Activated naive CD4-positive, alpha-beta T cell treated with anti-CD3 and anti-CD28 coated beads for 36 hours (primary cell): ENCODE measurements at regions of chr19 and their contacts with region 1.

Region 1: DNA sequence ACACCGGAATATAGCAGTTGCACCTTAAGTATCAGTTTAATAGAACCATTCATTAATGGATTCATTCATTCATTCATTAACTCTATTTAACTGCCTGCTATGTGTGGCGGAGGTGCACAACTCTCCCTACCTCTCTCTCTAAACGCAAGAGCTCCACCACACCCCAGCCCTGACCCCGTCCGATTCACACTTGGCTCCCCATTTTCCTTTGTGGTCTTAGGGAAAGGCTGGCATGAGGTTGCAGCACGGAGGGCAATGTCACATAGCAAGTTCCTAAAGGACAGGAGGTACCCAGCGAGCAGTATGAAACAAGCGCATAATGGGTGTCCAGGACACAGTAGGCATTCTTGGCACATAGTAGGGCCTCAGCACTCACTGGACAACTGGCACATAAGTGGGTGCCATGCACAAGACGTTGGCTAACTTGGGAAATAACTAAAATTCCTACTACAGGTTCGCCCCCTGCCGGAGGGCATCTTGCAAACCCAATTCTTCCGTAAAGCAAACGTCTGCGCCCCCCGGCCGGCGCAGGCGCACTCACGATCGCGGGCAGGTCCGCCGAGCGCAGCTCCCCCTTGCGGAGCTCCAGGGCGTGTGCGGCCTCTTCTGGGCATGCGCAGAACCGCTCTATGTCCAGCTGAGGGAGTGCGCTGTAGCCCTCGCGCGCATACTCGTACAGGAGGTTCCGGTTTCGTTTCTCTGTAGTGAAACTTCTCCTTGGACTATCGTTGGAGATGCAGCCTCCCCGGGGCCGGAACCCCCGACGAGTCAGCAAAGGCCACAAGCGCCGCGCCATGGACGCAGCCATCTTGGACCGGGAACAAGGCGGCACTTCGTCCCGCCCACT is at the start of gene SARS2:
- DNase-seq: peak; percentile 94
- H3K4me3 Mint-ChIP-seq: peak within 1 kb of the TSS; percentile 98
- H3K27ac Mint-ChIP-seq: peak within 1 kb of the TSS; percentile 96
- H3K4me1 Mint-ChIP-seq: peaks cover 41% of the 10 kb centered on the region
- H3K27me3 Mint-ChIP-seq: no peaks in the 10 kb centered on the region
- total RNA-seq, gene SARS2: 43.6 to 52.6 TPM

Region 2: DNA sequence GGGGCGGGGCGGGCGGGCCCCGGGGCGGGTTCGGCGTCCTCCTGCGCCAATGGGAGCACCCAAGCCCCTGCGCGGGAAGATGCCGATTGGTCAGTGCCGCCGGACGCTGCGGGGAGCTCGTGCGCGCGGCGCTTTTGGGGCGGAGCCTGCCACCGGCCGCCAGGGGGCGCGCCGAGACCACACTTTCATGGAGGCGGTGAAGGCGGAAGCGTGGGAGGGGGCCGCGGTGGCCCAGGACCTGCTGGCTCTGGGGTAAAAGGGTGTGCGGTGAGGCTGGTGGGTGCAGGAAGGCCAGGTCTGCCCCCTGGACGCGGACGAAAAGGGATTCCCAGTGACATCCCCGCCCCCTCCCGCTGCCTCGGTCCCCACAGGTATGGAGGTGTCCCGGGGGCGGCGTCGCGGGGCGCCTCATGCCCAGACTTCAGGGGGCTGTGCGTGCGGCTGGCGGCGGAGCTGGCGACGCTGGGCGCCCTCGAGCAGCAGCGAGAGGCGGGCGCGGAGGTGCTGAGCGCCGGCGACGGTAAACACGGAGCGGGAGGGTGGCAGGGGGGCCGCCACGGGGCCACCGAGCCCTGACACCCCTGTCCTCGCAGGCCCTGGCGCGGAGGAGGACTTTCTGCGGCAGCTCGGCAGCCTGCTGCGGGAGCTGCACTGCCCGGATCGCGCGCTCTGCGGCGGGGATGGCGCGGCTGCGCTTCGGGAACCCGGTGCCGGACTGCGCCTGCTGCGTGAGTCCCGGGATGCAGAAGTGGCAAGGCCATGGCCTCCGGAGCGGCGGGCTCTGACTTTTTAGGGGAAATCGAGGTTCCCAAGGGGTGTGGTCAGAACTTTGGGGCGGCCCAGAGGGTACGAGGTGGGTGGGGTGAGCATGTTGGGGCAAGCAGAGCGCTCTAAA is 526.9 kb before region 1 on chr19 and contains the start of gene FAM98C:
- CTCF ChIA-PET with region 1: interaction called, 13 read pairs
- intact Hi-C with region 1: loop called (anchors 2 kb)
- DNase-seq: peak; percentile 98
- H3K4me3 Mint-ChIP-seq: peak within 1 kb of the TSS; percentile 90
- H3K27ac Mint-ChIP-seq: peak within 1 kb of the TSS; percentile 84
- H3K4me1 Mint-ChIP-seq: peaks cover 15% of the 10 kb centered on the region
- H3K27me3 Mint-ChIP-seq: no peaks in the 10 kb centered on the region
- total RNA-seq, gene FAM98C: 21.5 to 27.0 TPM

Region 3: DNA sequence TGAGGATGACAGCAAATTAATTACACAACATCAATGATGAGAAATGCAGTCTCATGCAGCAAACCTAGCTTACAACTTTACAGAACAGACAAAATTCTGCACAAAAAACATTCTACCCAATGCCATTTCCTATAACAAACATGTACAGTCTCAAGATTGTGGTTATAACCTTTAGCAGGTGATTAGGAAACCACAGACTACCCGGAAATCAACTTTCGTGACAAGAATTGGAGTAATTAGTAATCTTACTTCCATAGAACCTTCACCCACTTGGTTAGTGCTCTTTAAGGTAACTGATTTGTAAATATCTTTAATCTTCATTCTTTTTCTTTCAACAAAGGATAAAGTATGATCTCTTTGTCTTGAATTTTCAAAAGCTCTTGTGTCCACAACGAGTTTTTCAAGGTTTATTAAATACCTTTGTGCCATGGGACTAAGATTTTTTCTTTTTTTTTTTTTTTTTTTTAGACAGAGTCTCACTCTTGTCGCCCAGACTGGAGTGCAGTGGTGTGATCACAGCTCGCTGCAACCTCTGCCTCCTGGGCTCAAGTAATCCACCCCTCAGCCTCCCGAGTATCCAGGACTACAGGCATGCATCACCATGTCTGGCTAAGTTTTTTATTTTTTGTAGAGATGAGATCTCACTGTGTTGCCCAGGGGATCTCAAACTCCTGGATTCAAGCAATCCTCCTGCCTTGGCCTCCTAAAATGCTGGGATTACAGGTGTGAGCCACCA is 391.2 kb before region 1 on chr19:
- CTCF ChIA-PET with region 1: interaction called, 3 read pairs
- intact Hi-C with region 1: loop called (anchors 1 kb)
- DNase-seq: peak; percentile 61
- H3K4me3 Mint-ChIP-seq: peak overlapping the region; percentile 14
- H3K27ac Mint-ChIP-seq: peak overlapping the region; percentile 85
- H3K4me1 Mint-ChIP-seq: peaks cover 35% of the 10 kb centered on the region
- H3K27me3 Mint-ChIP-seq: no peaks in the 10 kb centered on the region

Region 4: GRCh38 chr19:38634757-38635482 is 295.2 kb before region 1 on chr19:
- CTCF ChIA-PET with region 1: interaction called, 4 read pairs
- intact Hi-C with region 1: loop called (anchors 1 kb)
- DNase-seq: peak; percentile 80
- H3K4me3 Mint-ChIP-seq: no peak overlapping the region
- H3K27ac Mint-ChIP-seq: no peak overlapping the region
- H3K4me1 Mint-ChIP-seq: peaks cover 29% of the 10 kb centered on the region
- H3K27me3 Mint-ChIP-seq: no peaks in the 10 kb centered on the region

Region 5: DNA sequence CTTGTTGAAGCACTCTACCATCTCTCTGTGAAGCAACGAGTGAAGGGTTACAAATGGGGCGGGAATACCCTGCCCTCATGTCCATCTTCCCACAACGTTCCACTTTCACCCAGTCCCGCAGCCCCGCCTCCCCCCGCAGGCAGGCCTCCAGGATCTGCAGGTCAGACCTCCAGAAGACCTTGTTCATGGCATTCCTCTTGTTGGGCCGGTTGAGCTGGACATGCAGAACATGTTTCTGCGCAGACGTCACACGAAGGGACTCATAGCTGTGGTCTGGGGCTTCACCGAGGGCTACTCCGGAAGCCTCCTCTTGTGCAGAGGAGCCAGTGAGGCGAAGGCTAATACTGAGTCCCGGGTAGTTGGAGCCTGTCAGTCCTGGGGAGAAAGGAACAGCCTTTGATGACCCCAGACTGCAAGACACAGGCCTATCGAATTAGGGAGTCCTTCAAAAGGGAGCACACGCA is 99.0 kb before region 1 on chr19:
- CTCF ChIA-PET with region 1: no interaction called
- intact Hi-C with region 1: loop called (anchors 1 kb)
- DNase-seq: peak; percentile 64
- H3K4me3 Mint-ChIP-seq: peak overlapping the region; percentile 79
- H3K27ac Mint-ChIP-seq: peak overlapping the region; percentile 94
- H3K4me1 Mint-ChIP-seq: peaks cover 34% of the 10 kb centered on the region
- H3K27me3 Mint-ChIP-seq: no peaks in the 10 kb centered on the region

Region 6: GRCh38 chr19:38899447-38900219 is 30.5 kb before region 1 on chr19 and contains the starts of genes NFKBIB and SIRT2:
- CTCF ChIA-PET with region 1: interaction called, 22 read pairs
- intact Hi-C with region 1: loop called (anchors 1 kb)
- DNase-seq: peak; percentile 100
- H3K4me3 Mint-ChIP-seq: peak within 1 kb of the TSS; percentile 96
- H3K27ac Mint-ChIP-seq: peak within 1 kb of the TSS; percentile 86
- H3K4me1 Mint-ChIP-seq: peaks cover 41% of the 10 kb centered on the region
- H3K27me3 Mint-ChIP-seq: no peaks in the 10 kb centered on the region
- total RNA-seq, gene NFKBIB: 47.2 to 52.7 TPM
- total RNA-seq, gene SIRT2: 18.2 to 19.6 TPM